ENCODE measurements at regions of chr1 and their contacts with region 1.

Region 1: GRCh38 chr1:210143465-210144062 is 89.0 kb upstream of the SERTAD4 start:
- DNase-seq: peak; percentile 52 to 83 (median 78)
- H3K4me3 ChIP-seq: no peak overlapping the region
- H3K27ac ChIP-seq: no peak overlapping the region
- H3K4me1 ChIP-seq: no peaks in the 10 kb centered on the region
- H3K27me3 ChIP-seq: no peaks in the 10 kb centered on the region
- CTCF ChIP-seq: peak; percentile 36 to 70 (median 62)
- EP300 ChIP-seq: no peak
- POLR2A ChIP-seq: no peak

Region 2: DNA sequence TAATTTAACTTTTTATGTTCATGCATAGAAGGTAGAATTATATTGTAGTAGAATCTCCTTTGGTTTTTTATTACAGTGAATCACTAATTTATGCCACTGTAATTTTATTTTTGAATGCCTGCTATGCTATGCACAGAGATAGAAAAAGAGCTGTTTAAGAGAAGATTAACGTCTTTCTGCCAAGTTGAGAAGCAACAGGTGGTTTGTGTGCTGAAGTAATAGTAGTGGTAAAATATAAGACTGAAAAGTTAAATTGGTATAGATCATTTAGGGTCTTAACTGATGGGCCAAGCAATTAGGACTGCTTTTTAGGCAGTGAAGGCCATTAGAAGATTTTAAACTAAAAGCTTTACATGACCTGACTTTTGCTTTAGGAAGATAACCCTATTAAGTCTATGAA is 90.4 kb before region 1 on chr1:
- intact Hi-C with region 1: no loop called
- DNase-seq: no peak
- H3K4me3 ChIP-seq: no peak overlapping the region
- H3K27ac ChIP-seq: no peak overlapping the region
- H3K4me1 ChIP-seq: no peaks in the 10 kb centered on the region
- H3K27me3 ChIP-seq: no peaks in the 10 kb centered on the region
- CTCF ChIP-seq: no peak
- EP300 ChIP-seq: no peak
- POLR2A ChIP-seq: no peak

Region 3: GRCh38 chr1:210272666-210273065 is 129.1 kb after region 1 on chr1:
- intact Hi-C with region 1: no loop called
- DNase-seq: no peak
- H3K4me3 ChIP-seq: no peak overlapping the region
- H3K27ac ChIP-seq: no peak overlapping the region
- H3K4me1 ChIP-seq: no peaks in the 10 kb centered on the region
- H3K27me3 ChIP-seq: no peaks in the 10 kb centered on the region
- CTCF ChIP-seq: no peak
- EP300 ChIP-seq: no peak
- POLR2A ChIP-seq: no peak

Region 4: GRCh38 chr1:210311726-210312493 is 168.3 kb after region 1 on chr1:
- intact Hi-C with region 1: loop called (anchors 2 to 10 kb)
- DNase-seq: no peak
- H3K4me3 ChIP-seq: no peak overlapping the region
- H3K27ac ChIP-seq: no peak overlapping the region
- H3K4me1 ChIP-seq: no peaks in the 10 kb centered on the region
- H3K27me3 ChIP-seq: no peaks in the 10 kb centered on the region
- CTCF ChIP-seq: no peak
- EP300 ChIP-seq: no peak
- POLR2A ChIP-seq: no peak